Mammary epithelial cell (primary cell): ENCODE measurements at regions of chr3 and their contacts with region 1.

Region 1: GRCh38 chr3:30538787-30539186 is 67.6 kb upstream of the TGFBR2 start:
- DNase-seq: peak; percentile 83
- H3K4me3 ChIP-seq: peak overlapping the region in 1 of 3 experiments; percentile 12
- H3K27ac ChIP-seq: peak overlapping the region; percentile 92
- H3K4me1 ChIP-seq: peaks cover 23% of the 10 kb centered on the region
- H3K27me3 ChIP-seq: no peaks in the 10 kb centered on the region
- CTCF ChIP-seq: no peak

Region 2: GRCh38 chr3:30597131-30597768 is 58.5 kb after region 1 on chr3:
- CTCF ChIA-PET with region 1: no interaction called
- dilution Hi-C with region 1: no loop called
- in situ Hi-C with region 1: no loop called
- intact Hi-C with region 1: loop called (anchors 1 kb)
- DNase-seq: peak; percentile 97
- H3K4me3 ChIP-seq: no peak overlapping the region
- H3K27ac ChIP-seq: peak overlapping the region; percentile 100
- H3K4me1 ChIP-seq: peaks cover 35% of the 10 kb centered on the region
- H3K27me3 ChIP-seq: no peaks in the 10 kb centered on the region
- CTCF ChIP-seq: no peak